ENCODE measurements at regions of chr10 and their contacts with region 1.

Region 1: DNA sequence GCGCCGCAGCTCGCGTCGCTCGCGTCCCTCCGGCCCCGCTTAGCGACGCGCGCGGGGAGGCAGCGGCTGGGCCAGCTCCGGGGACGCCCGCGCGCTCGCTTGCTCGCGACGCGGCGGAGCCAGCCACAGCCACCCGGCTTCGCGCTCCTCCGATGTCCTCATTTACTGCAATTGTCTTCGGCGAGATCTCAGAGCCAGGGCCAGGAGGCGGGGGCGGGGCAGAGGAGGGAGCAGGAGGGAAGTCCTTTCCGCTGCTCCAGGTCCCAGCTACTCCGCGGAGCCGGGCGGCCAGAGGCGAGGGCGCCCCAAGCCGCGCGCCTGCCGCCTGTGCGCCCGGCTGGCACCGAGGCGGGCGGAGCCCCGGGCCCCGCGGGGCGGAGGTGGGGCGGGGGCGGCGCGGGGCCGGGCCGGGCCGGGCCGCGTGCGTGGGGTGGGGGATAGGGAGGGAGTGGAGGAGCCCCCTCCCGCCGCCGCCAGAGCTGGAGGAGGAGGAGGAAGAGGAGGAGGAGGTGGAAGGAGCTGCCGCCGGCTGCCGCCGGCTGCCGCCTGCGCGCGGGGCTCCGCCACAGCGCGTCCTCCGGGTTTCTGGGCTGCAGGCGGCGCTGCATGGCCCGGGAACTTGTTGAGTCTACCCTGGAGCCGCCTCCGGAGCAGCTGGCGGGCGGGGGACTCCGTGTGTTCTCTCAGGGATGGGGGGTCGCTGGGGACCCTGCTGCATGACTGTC is at the start of gene INSYN2A:
- DNase-seq: peak; percentile 37
- H3K4me3 ChIP-seq: peak within 1 kb of the TSS; percentile 30 to 41 (median 39)
- H3K27ac ChIP-seq: no peak within 1 kb of the TSS
- H3K4me1 ChIP-seq: peaks cover 4% of the 10 kb centered on the region
- H3K27me3 ChIP-seq: peaks cover 5 to 19% of the 10 kb centered on the region in 2 experiments
- CTCF ChIP-seq: peak; percentile 13 to 27
- POLR2A ChIP-seq: no peak
- total RNA-seq, gene INSYN2A: 0.07 TPM in 1 of 2 replicates, not detected in the other

Region 2: GRCh38 chr10:127148066-127148932 is 48.1 kb before region 1 on chr10:
- CTCF ChIA-PET with region 1: interaction called, 5 read pairs
- POLR2A ChIA-PET with region 1: no interaction called
- dilution Hi-C with region 1: no loop called
- intact Hi-C with region 1: loop called (anchors 1 kb)
- DNase-seq: peak; percentile 89
- H3K4me3 ChIP-seq: peak overlapping the region in 1 of 3 experiments; percentile 13
- H3K27ac ChIP-seq: peak overlapping the region; percentile 95
- H3K4me1 ChIP-seq: peaks cover 28% of the 10 kb centered on the region
- H3K27me3 ChIP-seq: no peaks in the 10 kb centered on the region
- CTCF ChIP-seq: no peak
- POLR2A ChIP-seq: no peak

Region 3: GRCh38 chr10:127832501-127832900 is 636.1 kb after region 1 on chr10:
- CTCF ChIA-PET with region 1: no interaction called
- POLR2A ChIA-PET with region 1: no interaction called
- dilution Hi-C with region 1: no loop called
- intact Hi-C with region 1: no loop called
- DNase-seq: no peak
- H3K4me3 ChIP-seq: no peak overlapping the region
- H3K27ac ChIP-seq: no peak overlapping the region
- H3K4me1 ChIP-seq: no peaks in the 10 kb centered on the region
- H3K27me3 ChIP-seq: no peaks in the 10 kb centered on the region
- CTCF ChIP-seq: no peak
- POLR2A ChIP-seq: no peak

Measured in endothelial cell of umbilical vein (primary cell).